GM13976 (cell line): ENCODE measurements at regions of chr22 and their contacts with region 1.

Region 1: DNA sequence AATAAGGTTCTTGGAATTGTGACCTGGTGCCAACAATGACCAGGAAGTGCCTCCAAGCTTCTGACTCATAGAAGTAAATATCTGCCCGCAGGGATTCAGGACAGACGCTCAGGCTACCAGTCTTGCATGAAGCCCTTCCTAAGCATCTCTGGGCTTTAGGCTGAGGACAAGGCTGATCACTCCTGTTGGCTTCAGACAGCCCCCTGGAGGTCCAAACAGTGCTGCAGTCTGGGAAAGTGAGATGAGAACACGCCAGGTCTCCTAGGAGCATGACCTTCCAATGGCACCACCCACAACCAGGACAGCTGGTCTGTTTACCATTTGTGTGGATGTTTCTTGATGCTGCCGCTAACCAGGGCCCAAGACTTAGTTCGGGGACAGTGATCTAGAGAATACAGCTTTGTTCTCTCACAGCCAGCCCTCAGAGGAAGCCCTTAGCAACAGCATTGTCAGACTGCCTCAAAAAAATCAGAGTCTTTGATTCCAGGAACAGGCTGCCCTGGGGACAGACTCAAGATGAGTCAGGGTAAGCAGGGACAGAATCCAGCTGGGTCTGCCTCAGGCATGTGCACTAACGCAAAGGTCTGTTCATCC is 111.2 kb downstream of the ZNF280B start:
- DNase-seq: no peak
- CTCF ChIP-seq: no peak

Region 2: DNA sequence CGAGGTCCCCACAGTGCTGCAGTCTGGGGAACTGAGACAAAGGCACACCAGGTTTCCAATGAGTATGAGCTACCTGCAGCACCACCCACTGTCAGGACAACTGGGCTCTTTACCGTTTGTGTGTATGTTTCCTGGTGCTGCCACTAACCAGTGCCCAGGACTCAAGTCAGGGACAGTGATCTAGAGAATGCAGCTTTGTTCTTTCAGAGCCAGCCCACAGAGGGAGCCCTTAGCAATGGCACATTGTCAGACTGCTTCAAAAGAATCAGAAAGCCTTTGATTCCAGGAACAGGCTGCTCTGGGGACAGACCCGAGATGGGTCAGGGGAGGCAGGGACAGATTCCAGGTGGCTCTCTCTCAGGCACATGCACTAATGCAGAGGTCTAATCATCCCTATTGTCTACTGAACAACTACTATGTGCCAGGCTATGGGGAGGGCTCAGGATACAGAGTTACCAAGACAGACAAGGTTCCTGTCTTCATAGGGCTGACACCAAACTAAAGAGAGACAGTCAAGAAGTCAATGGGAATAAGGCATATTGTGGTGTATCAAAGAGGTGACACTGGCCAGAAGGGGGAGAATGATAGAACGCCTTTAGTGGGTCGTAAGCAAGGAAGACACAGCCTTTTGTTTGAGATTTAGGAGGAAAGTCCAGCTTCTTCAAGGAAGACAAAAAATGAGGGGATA is 49.1 kb before region 1 on chr22:
- in situ Hi-C with region 1: loop called (anchors 5 kb)
- DNase-seq: no peak
- CTCF ChIP-seq: peak; percentile 6

Region 3: DNA sequence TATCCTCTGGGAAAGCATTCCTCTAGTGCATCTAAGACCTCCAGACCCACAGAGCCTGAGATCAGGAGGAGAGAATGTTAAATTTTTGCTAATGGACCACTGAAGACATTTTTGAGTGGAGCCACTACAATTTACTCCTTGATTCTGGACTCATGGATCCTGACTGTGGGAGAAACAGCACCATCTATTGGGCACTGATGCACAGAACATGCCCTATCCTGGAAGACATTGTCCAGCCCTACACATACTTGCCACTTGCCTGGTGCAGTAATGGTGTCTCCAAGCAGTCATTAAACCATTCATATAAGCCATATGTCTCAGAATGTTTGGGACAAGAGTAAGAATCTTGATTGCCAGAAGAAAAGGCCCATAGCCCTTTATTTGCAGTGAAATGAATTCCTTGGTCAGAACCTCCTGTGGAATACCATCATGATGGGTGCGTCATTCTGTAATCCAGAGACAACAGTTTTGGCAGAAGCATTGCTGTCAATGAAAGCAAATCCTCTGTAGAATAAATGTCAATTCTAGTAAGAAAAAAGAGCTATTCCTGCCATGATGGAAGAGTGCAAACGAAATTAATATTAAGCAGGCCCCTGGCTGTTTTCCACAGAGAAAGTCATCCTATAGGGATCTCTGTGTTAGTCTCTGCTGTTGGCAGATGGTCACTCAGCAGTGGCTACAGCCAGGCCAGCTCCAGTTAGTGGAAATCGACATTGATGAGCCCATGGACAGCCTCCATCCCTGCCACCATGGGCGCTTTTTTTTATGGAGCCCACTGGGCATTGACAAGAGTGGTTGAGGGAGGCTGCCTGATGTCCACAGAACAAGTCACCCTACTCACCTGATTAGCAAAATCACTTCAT is 290.5 kb after region 1 on chr22:
- in situ Hi-C with region 1: no loop called
- DNase-seq: peak; percentile 51
- CTCF ChIP-seq: peak; percentile 75